GM12878 (cell line): ENCODE measurements at regions of chr9 and their contacts with region 1.

Region 1: DNA sequence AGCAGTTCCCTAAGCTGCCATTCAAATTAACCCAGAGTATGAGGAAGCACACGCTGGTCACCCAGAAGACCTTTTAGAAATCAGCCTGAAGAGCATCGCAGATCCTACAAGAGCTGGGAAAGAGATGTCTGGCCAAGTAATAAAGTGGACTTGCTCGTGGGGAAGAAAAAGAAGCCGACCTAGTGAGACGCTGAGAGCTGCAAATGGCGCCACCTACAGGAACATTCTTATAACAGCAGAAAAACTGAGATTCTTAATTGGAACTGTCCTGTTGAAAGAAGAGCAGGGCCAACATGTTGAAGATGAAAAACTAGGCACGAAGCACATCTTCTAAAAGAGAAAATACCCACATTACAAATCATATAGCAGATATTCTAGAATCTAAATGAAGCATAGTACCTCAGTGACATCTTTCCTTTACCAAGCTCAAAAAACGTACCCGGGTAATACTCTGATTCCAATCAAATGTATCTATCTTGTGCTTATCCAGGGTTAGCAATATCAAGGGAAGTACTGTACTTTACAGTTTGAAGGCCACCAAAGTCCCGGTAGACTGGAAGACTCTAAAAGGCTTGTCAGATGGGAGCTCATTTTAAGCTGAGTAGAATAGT is 3.9 kb upstream of the GNAQ start:
- DNase-seq: peak; percentile 7
- ATAC-seq: peak; percentile 51
- H3K4me3 ChIP-seq: no peak overlapping the region
- H3K27ac ChIP-seq: no peak overlapping the region
- H3K4me1 ChIP-seq: no peaks in the 10 kb centered on the region
- H3K27me3 ChIP-seq: peaks cover 4 to 15% of the 10 kb centered on the region in 2 experiments; a peak in 3 of 4 replicates
- CTCF ChIP-seq: peak; percentile 64 to 72 (median 71)
- EP300 ChIP-seq: no peak
- POLR2A ChIP-seq: no peak
- RAD21 ChIP-seq: peak; percentile 84

Region 2: GRCh38 chr9:77751341-77752091 is 284.0 kb before region 1 on chr9:
- CTCF ChIA-PET with region 1: interaction called, 17 read pairs
- POLR2A ChIA-PET with region 1: no interaction called
- RAD21 ChIA-PET with region 1: interaction called, 6 read pairs
- SMC1A ChIA-PET with region 1: interaction called, 6 read pairs
- in situ Hi-C with region 1: no loop called
- intact Hi-C with region 1: loop called (anchors 10 kb)
- DNase-seq: no peak
- ATAC-seq: peak; percentile 76
- H3K4me3 ChIP-seq: no peak overlapping the region
- H3K27ac ChIP-seq: no peak overlapping the region
- H3K4me1 ChIP-seq: no peaks in the 10 kb centered on the region
- H3K27me3 ChIP-seq: no peaks in the 10 kb centered on the region
- CTCF ChIP-seq: peak; percentile 34 to 53 (median 34); a peak in 4 of 6 replicates
- EP300 ChIP-seq: no peak
- POLR2A ChIP-seq: no peak
- RAD21 ChIP-seq: peak; percentile 51

Region 3: DNA sequence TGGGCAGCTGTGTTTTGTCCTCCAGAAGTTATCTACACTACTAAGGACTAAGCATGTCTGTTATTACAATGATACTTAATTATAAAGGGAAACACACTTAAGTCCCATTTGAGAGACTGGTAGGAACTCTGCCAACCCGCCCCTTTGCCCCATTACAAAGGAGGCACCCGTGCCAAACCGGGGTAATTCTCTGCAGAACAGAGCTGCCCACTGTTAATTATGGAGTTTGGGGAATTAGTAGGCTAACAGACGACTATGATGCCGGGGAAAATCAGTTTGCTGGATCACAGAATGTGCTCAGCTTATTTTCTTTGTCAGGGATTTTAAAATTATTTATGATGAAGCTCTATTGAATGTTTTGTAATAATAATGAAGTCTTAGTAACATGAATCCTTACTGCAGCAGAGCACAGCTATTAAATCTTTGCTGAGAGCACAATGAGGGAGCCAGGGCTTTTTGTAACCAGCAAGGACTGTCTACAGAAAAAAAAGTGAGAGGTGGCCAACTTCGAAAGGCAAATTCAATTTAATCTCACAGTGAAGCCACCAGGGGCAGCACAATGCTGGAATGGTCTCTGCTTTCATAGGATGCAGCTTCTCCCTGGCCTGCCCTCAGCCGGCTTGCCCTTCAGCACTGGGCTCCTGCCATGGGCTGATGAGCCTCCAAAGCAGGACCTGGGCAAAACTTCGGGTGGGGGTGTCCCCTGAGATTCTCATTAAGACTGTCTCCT is 138.4 kb before region 1 on chr9:
- CTCF ChIA-PET with region 1: interaction called, 10 read pairs
- POLR2A ChIA-PET with region 1: no interaction called
- RAD21 ChIA-PET with region 1: interaction called, 15 read pairs
- SMC1A ChIA-PET with region 1: interaction called, 7 read pairs
- in situ Hi-C with region 1: no loop called
- intact Hi-C with region 1: no loop called
- DNase-seq: no peak
- ATAC-seq: peak; percentile 36
- H3K4me3 ChIP-seq: no peak overlapping the region
- H3K27ac ChIP-seq: no peak overlapping the region
- H3K4me1 ChIP-seq: no peaks in the 10 kb centered on the region
- H3K27me3 ChIP-seq: no peaks in the 10 kb centered on the region
- CTCF ChIP-seq: peak in 2 of 3 experiments; percentile 6 to 7; a peak in 1 of 6 replicates
- EP300 ChIP-seq: no peak
- POLR2A ChIP-seq: no peak
- RAD21 ChIP-seq: no peak

Region 4: GRCh38 chr9:77997611-77998284 is 37.7 kb before region 1 on chr9:
- CTCF ChIA-PET with region 1: interaction called, 12 read pairs
- POLR2A ChIA-PET with region 1: no interaction called
- RAD21 ChIA-PET with region 1: interaction called, 5 read pairs
- SMC1A ChIA-PET with region 1: interaction called, 13 read pairs
- in situ Hi-C with region 1: no loop called
- intact Hi-C with region 1: no loop called
- DNase-seq: no peak
- ATAC-seq: peak; percentile 66
- H3K4me3 ChIP-seq: no peak overlapping the region
- H3K27ac ChIP-seq: no peak overlapping the region
- H3K4me1 ChIP-seq: no peaks in the 10 kb centered on the region
- H3K27me3 ChIP-seq: no peaks in the 10 kb centered on the region; a peak in 3 of 4 replicates
- CTCF ChIP-seq: no peak
- EP300 ChIP-seq: no peak
- POLR2A ChIP-seq: no peak
- RAD21 ChIP-seq: no peak

Region 5: GRCh38 chr9:78053627-78054026 is 18.1 kb after region 1 on chr9:
- CTCF ChIA-PET with region 1: interaction called, 14 read pairs
- POLR2A ChIA-PET with region 1: no interaction called
- RAD21 ChIA-PET with region 1: no interaction called
- SMC1A ChIA-PET with region 1: interaction called, 8 read pairs
- in situ Hi-C with region 1: no loop called
- intact Hi-C with region 1: no loop called
- DNase-seq: no peak
- ATAC-seq: no peak
- H3K4me3 ChIP-seq: no peak overlapping the region
- H3K27ac ChIP-seq: no peak overlapping the region
- H3K4me1 ChIP-seq: no peaks in the 10 kb centered on the region
- H3K27me3 ChIP-seq: no peaks in the 10 kb centered on the region
- CTCF ChIP-seq: no peak
- EP300 ChIP-seq: no peak
- POLR2A ChIP-seq: no peak
- RAD21 ChIP-seq: no peak

Region 6: GRCh38 chr9:78213712-78214111 is 178.2 kb after region 1 on chr9:
- CTCF ChIA-PET with region 1: interaction called, 7 read pairs
- POLR2A ChIA-PET with region 1: no interaction called
- RAD21 ChIA-PET with region 1: interaction called, 3 read pairs
- SMC1A ChIA-PET with region 1: interaction called, 10 read pairs
- in situ Hi-C with region 1: no loop called
- intact Hi-C with region 1: loop called (anchors 5 kb)
- DNase-seq: no peak
- ATAC-seq: peak; percentile 70
- H3K4me3 ChIP-seq: no peak overlapping the region
- H3K27ac ChIP-seq: no peak overlapping the region
- H3K4me1 ChIP-seq: peaks cover 13% of the 10 kb centered on the region
- H3K27me3 ChIP-seq: no peaks in the 10 kb centered on the region
- CTCF ChIP-seq: peak; percentile 25 to 52 (median 40); a peak in 5 of 6 replicates
- EP300 ChIP-seq: no peak
- POLR2A ChIP-seq: no peak
- RAD21 ChIP-seq: peak; percentile 58

Region 7: DNA sequence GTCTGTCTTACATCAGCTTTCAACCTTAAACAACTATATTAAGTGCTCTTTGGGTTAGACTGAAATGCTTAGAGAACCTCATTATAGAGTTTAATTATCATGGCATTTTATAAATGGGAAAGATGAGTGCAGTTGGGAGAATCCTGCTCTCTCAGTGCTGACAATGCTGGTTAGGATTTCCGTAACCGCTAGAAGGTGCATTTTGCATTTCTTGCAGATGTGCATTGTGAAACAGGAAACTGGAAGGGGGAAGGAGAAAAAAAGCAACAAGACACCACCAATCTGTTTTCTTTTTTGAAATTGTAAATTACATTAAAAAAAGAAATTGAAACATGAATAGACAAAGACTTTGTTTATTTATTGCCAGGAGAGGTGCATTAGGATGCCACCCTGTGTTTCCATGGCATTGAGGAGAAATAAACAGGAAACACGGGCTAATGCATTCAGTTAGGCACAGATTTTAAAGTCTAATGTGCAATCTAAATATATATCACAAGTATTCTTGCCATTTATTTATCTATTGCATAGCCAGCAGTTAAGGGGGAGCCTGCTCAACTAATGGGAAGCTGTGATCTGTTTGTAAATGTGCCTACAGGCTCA is 740.3 kb after region 1 on chr9:
- CTCF ChIA-PET with region 1: no interaction called
- POLR2A ChIA-PET with region 1: no interaction called
- RAD21 ChIA-PET with region 1: no interaction called
- SMC1A ChIA-PET with region 1: no interaction called
- in situ Hi-C with region 1: no loop called
- intact Hi-C with region 1: no loop called
- DNase-seq: no peak
- ATAC-seq: no peak
- H3K4me3 ChIP-seq: no peak overlapping the region
- H3K27ac ChIP-seq: no peak overlapping the region
- H3K4me1 ChIP-seq: no peaks in the 10 kb centered on the region
- H3K27me3 ChIP-seq: no peaks in the 10 kb centered on the region; a peak in 1 of 4 replicates
- CTCF ChIP-seq: no peak
- EP300 ChIP-seq: no peak
- POLR2A ChIP-seq: no peak
- RAD21 ChIP-seq: no peak